CD4-positive, alpha-beta T cell (primary cell): ENCODE measurements at regions of chr16 and their contacts with region 1.

Region 1: DNA sequence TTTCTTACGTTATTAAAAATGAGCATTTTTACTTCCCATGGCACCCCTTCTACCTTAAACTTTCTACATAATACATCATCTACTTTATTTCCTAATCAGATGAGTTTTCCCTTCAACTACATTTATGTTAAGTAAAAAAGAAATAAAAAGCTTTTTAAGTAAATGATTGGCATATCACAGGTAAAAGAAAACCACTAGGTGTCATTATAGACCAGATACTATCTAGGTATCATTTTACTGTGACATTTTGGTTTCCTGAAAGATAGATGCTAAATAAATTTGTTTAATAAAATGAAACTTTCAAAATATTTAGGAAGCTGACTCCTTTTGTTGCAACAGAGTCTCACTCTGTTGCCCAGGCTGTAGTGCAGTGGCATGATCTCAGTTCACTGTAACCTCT is 3.8 kb upstream of the CMTM1 start:
- DNase-seq: peak in 3 of 14 experiments; percentile 44 to 60 (median 54)
- ATAC-seq: peak; percentile 64
- H3K4me3 ChIP-seq: no peak overlapping the region
- H3K4me3 Mint-ChIP-seq: peak overlapping the region; percentile 37
- H3K27ac ChIP-seq: no peak overlapping the region
- H3K27ac Mint-ChIP-seq: peak overlapping the region; percentile 49
- H3K4me1 ChIP-seq: peaks cover 38% of the 10 kb centered on the region
- H3K4me1 Mint-ChIP-seq: peaks cover 65% of the 10 kb centered on the region
- H3K27me3 ChIP-seq: no peaks in the 10 kb centered on the region
- H3K27me3 Mint-ChIP-seq: no peaks in the 10 kb centered on the region
- CTCF ChIP-seq: peak; percentile 58

Region 2: GRCh38 chr16:66521951-66522771 is 40.2 kb before region 1 on chr16:
- CTCF ChIA-PET with region 1: interaction called, 15 read pairs
- POLR2A ChIA-PET with region 1: interaction called, 6 read pairs
- intact Hi-C with region 1: no loop called
- DNase-seq: peak; percentile 41 to 93 (median 80)
- ATAC-seq: peak; percentile 76
- H3K4me3 ChIP-seq: peak overlapping the region; percentile 2
- H3K4me3 Mint-ChIP-seq: peak overlapping the region; percentile 74
- H3K27ac ChIP-seq: peak overlapping the region; percentile 14 to 49
- H3K27ac Mint-ChIP-seq: peak overlapping the region; percentile 93
- H3K4me1 ChIP-seq: peaks cover 84% of the 10 kb centered on the region
- H3K4me1 Mint-ChIP-seq: peaks cover 86% of the 10 kb centered on the region
- H3K27me3 ChIP-seq: no peaks in the 10 kb centered on the region
- H3K27me3 Mint-ChIP-seq: no peaks in the 10 kb centered on the region
- CTCF ChIP-seq: no peak

Region 3: DNA sequence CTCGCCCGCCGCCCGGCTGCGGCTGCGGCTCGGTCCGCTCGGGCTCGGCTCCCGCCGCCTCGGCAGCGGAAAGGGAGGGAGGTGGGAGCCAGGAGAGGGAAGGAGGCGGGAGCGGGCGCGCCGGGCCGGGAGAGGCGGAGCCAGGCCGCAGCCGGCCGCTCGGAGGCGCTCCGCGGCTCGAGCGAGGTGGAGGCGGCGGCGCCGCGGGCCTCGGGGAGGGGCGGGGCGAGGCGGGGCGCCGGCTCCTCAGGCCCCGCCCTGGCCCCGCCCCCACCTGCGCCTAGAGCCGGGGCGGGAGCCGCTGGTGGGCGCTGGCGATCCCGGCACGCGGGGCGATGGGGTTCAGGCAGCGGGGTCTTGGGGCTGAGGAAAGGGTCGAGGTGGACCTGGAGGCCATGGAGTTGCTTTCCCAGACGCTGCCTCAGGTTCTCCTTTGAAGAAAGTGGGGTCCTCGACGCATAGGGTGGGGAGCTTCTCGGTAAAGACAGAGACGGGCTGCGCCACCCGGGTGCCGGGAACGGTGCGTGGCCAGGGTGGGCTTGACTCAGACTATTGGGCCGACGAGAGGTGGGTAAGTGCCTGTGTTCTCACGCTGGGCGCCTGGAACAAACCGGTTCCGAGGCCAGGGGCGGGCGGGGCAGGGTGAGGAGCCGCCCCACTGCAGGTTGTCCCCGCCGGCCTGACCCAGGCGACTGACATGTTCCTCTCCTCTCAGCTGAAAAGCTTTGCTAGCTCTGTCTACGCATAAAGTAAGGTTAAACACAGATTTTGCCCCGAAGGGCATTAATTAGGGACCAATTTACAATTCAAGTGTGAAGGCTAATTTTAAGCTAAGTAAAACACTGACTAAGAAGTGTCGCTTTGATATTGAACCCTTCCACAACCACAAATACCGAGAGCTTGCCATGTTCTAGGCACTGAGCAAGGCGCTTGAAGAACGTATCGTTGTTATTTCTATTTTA is 134.5 kb after region 1 on chr16 and contains the start of gene CMTM4:
- CTCF ChIA-PET with region 1: no interaction called
- POLR2A ChIA-PET with region 1: no interaction called
- intact Hi-C with region 1: loop called in 1 of 2 experiments (anchors 5 kb)
- DNase-seq: peak; percentile 42 to 92 (median 72)
- ATAC-seq: peak; percentile 95
- H3K4me3 ChIP-seq: peak within 1 kb of the TSS; percentile 73
- H3K4me3 Mint-ChIP-seq: peak within 1 kb of the TSS; percentile 90
- H3K27ac ChIP-seq: no peak within 1 kb of the TSS
- H3K27ac Mint-ChIP-seq: peak within 1 kb of the TSS; percentile 63
- H3K4me1 ChIP-seq: peaks cover 16% of the 10 kb centered on the region
- H3K4me1 Mint-ChIP-seq: peaks cover 14% of the 10 kb centered on the region
- H3K27me3 ChIP-seq: peaks cover 0 to 4% of the 10 kb centered on the region in 2 experiments
- H3K27me3 Mint-ChIP-seq: peaks cover 4% of the 10 kb centered on the region
- CTCF ChIP-seq: no peak
- total RNA-seq, gene CMTM4: 1.1 to 1.6 TPM

Region 4: DNA sequence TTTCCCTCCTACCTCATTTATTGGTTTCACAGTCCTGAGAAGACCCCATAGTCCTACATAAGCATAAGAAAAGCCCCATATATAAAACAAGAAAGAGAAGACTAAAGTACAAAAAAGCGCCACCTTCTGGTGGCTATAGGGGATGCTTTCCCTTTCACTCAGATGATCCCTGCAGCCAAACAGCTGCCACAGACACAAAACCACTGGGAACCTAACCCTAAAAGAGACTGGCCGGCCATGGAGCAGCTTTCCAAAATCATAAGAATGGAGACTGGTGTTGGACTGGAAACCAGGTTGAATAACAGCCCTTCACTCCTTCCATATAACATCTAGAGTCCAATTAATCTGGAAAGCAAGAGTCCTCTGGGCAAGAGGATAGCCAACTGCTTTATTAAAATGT is 177.6 kb after region 1 on chr16:
- CTCF ChIA-PET with region 1: interaction called, 4 read pairs
- POLR2A ChIA-PET with region 1: no interaction called
- intact Hi-C with region 1: loop called (anchors 5 kb)
- DNase-seq: peak in 8 of 14 experiments; percentile 5 to 67 (median 18)
- ATAC-seq: peak; percentile 64
- H3K4me3 ChIP-seq: no peak overlapping the region
- H3K4me3 Mint-ChIP-seq: no peak overlapping the region
- H3K27ac ChIP-seq: no peak overlapping the region
- H3K27ac Mint-ChIP-seq: peak overlapping the region; percentile 45
- H3K4me1 ChIP-seq: peaks cover 17% of the 10 kb centered on the region
- H3K4me1 Mint-ChIP-seq: peaks cover 24% of the 10 kb centered on the region
- H3K27me3 ChIP-seq: no peaks in the 10 kb centered on the region
- H3K27me3 Mint-ChIP-seq: no peaks in the 10 kb centered on the region
- CTCF ChIP-seq: peak; percentile 70

Region 5: GRCh38 chr16:66872943-66873684 is 310.7 kb after region 1 on chr16:
- CTCF ChIA-PET with region 1: interaction called, 3 read pairs
- POLR2A ChIA-PET with region 1: interaction called, 4 read pairs
- intact Hi-C with region 1: loop called (anchors 5 kb)
- DNase-seq: peak; percentile 75 to 94 (median 82)
- ATAC-seq: peak; percentile 90
- H3K4me3 ChIP-seq: peak overlapping the region; percentile 57
- H3K4me3 Mint-ChIP-seq: peak overlapping the region; percentile 75
- H3K27ac ChIP-seq: peak overlapping the region in 1 of 2 donors; percentile 24
- H3K27ac Mint-ChIP-seq: peak overlapping the region; percentile 32
- H3K4me1 ChIP-seq: peaks cover 26% of the 10 kb centered on the region
- H3K4me1 Mint-ChIP-seq: peaks cover 21% of the 10 kb centered on the region
- H3K27me3 ChIP-seq: no peaks in the 10 kb centered on the region
- H3K27me3 Mint-ChIP-seq: no peaks in the 10 kb centered on the region
- CTCF ChIP-seq: peak; percentile 92